Sciatic nerve (tissue), 2 donors: ENCODE measurements at regions of chr16 and their contacts with region 1.

Region 1: DNA sequence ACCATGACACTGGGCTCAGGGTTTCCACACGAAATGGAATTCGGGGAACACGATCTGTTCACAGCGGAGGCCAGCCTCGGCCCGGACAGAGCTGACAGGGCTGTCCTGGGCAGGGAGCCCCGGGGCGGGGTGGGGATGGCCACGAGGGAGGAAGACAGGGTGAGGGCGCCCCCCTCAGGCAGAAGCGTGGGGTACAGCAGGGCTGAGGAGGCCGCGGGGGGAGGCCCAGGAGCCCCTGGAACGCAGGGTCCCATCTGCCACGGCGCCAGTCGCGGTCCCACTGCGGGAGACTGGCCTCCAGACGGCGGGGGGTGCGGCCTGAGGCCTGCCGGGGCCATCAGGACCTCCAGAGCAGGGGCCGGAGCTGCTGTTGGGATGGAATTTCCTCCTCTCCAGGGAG is 75.9 kb downstream of the LMF1 start:
- DNase-seq: no peak
- ATAC-seq: no peak

Region 2: GRCh38 chr16:969508-970378 is 74.9 kb after region 1 on chr16:
- intact Hi-C with region 1: loop called (anchors 10 kb)
- DNase-seq: peak; percentile 82
- ATAC-seq: no peak